PC-3 (cell line): ENCODE measurements at regions of chr19 and their contacts with region 1.

Region 1: GRCh38 chr19:1000591-1001537 is 645 bp downstream of the GRIN3B start:
- DNase-seq: no peak
- ATAC-seq: no peak
- H3K4me3 ChIP-seq: no peak overlapping the region
- H3K27ac ChIP-seq: no peak overlapping the region
- H3K4me1 ChIP-seq: peaks cover 8% of the 10 kb centered on the region
- H3K27me3 ChIP-seq: no peaks in the 10 kb centered on the region; the same call in 1 of the 2 replicates
- CTCF ChIP-seq: no peak

Region 2: GRCh38 chr19:1032264-1032867 is 31.5 kb after region 1 on chr19:
- CTCF ChIA-PET with region 1: interaction called, 11 read pairs
- POLR2A ChIA-PET with region 1: no interaction called
- intact Hi-C with region 1: no loop called
- DNase-seq: no peak
- ATAC-seq: no peak
- H3K4me3 ChIP-seq: no peak overlapping the region
- H3K27ac ChIP-seq: no peak overlapping the region
- H3K4me1 ChIP-seq: no peaks in the 10 kb centered on the region; the same call in 1 of the 2 replicates
- H3K27me3 ChIP-seq: no peaks in the 10 kb centered on the region
- CTCF ChIP-seq: no peak